Gastrocnemius medialis (tissue), 4 donors: ENCODE measurements at regions of chr12 and their contacts with region 1.

Region 1: DNA sequence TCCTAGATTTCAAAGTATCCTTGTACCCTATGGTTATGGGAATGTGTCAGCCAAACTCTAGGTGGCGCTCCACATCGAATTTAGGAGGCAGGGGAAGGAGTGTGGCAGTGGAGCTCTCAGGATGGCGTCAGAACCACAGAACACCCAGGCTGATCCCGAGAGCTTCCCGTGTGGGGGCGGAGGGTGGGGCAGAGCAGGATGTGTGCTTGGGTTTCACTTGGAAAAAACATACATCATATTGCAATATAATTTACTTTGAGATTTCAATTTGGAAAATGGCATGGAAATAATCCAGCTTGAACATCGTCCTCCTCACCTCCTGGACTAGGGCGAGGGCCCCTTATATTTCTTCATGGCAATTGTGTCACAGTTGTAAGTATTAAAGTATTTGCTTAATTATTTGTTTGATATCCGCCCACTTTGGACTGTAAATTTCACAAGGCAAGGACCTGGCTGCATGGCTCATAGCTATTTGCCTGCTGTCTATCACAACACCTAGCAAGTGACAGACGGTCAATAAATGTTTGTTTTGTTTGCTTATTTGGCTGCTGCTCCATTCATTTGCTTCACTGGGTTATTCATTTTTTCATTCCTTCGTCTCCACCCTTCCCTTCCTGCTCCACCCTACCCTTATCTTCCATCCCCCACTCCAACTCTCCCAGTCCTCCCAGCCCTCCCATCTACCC is 221.5 kb upstream of the HMGA2 start:
- DNase-seq: peak; percentile 44 to 49
- ATAC-seq: peak; percentile 83 to 85
- H3K4me3 ChIP-seq: peak overlapping the region in 3 of 4 donors; percentile 4 to 15 (median 14)
- H3K27ac ChIP-seq: peak overlapping the region in 3 of 4 donors; percentile 36 to 51 (median 50)
- H3K4me1 ChIP-seq: peaks cover 8% of the 10 kb centered on the region in 2 donors
- H3K27me3 ChIP-seq: peaks cover 0 to 2% (median 0%) of the 10 kb centered on the region in 3 donors
- CTCF ChIP-seq: peak; percentile 27 to 64 (median 53)
- POLR2A ChIP-seq: no peak

Region 2: DNA sequence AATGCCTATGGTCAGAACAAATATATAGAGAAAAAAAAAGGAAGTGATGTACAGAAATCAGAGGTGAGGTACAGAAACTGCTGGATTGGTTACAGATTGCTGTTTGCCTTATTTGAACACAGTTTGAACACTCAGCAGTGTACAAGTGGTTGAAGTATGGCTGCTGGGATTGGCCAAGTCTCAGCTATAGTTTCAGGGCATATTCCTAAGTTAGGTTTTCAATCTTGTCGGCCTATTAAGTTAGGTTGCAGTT is 381.4 kb after region 1 on chr12:
- in situ Hi-C with region 1: loop called in 1 of 4 experiments (anchors 25 kb)
- intact Hi-C with region 1: loop called (anchors 5 kb)
- DNase-seq: no peak
- ATAC-seq: no peak
- H3K4me3 ChIP-seq: no peak overlapping the region
- H3K27ac ChIP-seq: no peak overlapping the region
- H3K4me1 ChIP-seq: no peaks in the 10 kb centered on the region
- H3K27me3 ChIP-seq: no peaks in the 10 kb centered on the region
- CTCF ChIP-seq: no peak
- POLR2A ChIP-seq: no peak

Region 3: DNA sequence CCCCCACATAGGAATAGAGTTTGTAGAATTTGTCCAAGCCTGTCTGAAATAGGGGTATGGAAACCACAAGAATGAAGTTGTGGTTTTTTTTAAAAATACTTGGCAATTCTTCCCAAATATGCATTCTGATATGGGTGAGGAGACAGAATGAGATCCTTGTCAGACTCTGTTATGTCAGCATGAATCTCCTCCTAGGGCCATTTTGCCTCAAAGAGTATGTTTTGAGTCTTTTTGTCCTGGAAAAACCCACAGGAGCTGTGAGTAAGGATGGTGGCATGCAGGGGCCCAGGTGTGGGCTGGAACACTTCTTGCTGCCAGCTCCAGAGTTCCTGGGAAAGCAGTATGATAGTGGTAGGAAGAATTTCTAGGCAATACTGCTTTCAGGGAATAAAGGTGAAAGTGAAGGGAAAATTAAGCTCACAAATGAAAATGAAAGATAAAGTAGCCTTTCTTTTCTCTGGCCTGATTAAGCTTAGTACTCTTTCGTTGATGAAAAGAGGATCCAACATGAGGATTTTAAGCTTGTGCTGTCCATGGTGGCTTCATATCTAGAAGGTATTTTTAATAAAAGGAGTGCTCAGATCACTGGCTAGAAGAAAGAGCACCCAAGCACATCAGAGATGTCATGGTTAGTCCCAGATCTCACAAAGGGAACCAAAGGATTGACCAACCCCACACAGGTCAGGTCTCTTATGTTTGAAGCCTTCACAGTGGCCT is 397.0 kb after region 1 on chr12:
- in situ Hi-C with region 1: loop called in 1 of 4 experiments (anchors 25 kb)
- intact Hi-C with region 1: no loop called
- DNase-seq: no peak
- ATAC-seq: no peak
- H3K4me3 ChIP-seq: no peak overlapping the region
- H3K27ac ChIP-seq: no peak overlapping the region
- H3K4me1 ChIP-seq: no peaks in the 10 kb centered on the region
- H3K27me3 ChIP-seq: no peaks in the 10 kb centered on the region
- CTCF ChIP-seq: no peak
- POLR2A ChIP-seq: no peak